Common myeloid progenitor, CD34-positive (primary cell): ENCODE measurements at regions of chr5 and their contacts with region 1.

Region 1: GRCh38 chr5:145681686-145682085 is 153.5 kb downstream of the PRELID2 start:
- DNase-seq: peak; percentile 55 to 79 (median 79)
- H3K4me3 ChIP-seq: no peak overlapping the region
- H3K27ac ChIP-seq: peak overlapping the region in 1 of 2 experiments; percentile 1
- H3K4me1 ChIP-seq: no peaks in the 10 kb centered on the region
- H3K27me3 ChIP-seq: no peaks in the 10 kb centered on the region

Region 2: DNA sequence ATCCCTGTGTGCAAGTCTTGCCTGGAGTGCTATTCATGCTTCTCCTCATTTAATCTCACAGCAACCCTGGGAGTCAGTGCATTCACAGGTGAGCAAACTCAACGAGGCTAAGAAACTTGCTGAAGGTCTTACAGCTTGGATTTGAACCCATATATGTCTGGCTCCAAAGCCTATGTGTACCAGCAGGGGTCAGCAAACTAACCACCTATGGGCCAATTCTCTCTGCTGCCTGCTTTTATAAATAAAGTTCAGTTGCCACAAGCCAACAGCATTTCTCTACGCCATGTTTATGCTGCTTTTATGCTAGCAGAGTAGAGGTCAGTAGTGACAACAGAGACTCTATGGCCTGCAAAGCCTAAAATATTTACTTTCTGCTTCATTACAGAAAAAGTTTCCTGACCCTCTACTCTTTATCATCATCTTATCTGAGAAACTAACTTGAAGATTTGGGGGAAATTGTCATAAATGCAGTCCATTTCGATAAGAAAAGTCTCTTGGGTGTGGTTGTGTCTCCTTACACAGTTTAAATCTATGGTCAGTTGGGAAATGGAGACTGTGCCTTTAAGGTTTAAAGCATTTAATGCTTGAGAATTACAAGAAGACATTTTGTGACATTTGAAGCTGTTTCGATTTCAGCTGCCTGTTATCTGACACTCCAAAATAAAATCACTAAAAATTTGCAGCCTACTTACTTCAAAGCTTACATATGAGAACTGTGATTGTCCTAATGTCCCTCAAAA is 15.7 kb after region 1 on chr5:
- CTCF ChIA-PET with region 1: interaction called, 18 read pairs
- POLR2A ChIA-PET with region 1: no interaction called
- DNase-seq: peak; percentile 51 to 71 (median 68)
- H3K4me3 ChIP-seq: no peak overlapping the region
- H3K27ac ChIP-seq: no peak overlapping the region
- H3K4me1 ChIP-seq: no peaks in the 10 kb centered on the region
- H3K27me3 ChIP-seq: no peaks in the 10 kb centered on the region

Region 3: GRCh38 chr5:145825751-145826180 is 144.1 kb after region 1 on chr5:
- CTCF ChIA-PET with region 1: interaction called, 17 read pairs
- POLR2A ChIA-PET with region 1: no interaction called
- DNase-seq: peak; percentile 65 to 77 (median 76)
- H3K4me3 ChIP-seq: no peak overlapping the region
- H3K27ac ChIP-seq: no peak overlapping the region
- H3K4me1 ChIP-seq: peaks cover 8 to 22% (median 14%) of the 10 kb centered on the region in 4 experiments
- H3K27me3 ChIP-seq: no peaks in the 10 kb centered on the region

Region 4: GRCh38 chr5:146130440-146131045 is 448.9 kb after region 1 on chr5:
- CTCF ChIA-PET with region 1: interaction called, 35 read pairs
- POLR2A ChIA-PET with region 1: no interaction called
- DNase-seq: peak; percentile 59 to 80 (median 78)
- H3K4me3 ChIP-seq: no peak overlapping the region
- H3K27ac ChIP-seq: no peak overlapping the region
- H3K4me1 ChIP-seq: peaks cover 0 to 3% (median 0%) of the 10 kb centered on the region in 4 experiments
- H3K27me3 ChIP-seq: no peaks in the 10 kb centered on the region